ENCODE measurements at regions of chr15 and their contacts with region 1.

Region 1: GRCh38 chr15:100349696-100350433 is 8.1 kb upstream of the ADAMTS17 start:
- DNase-seq: peak; percentile 72 to 91 (median 79)
- ATAC-seq: peak; percentile 92
- H3K4me3 ChIP-seq: peak overlapping the region; percentile 92
- H3K4me3 Mint-ChIP-seq: peak overlapping the region; percentile 98
- H3K27ac ChIP-seq: peak overlapping the region; percentile 59 to 72
- H3K27ac Mint-ChIP-seq: peak overlapping the region; percentile 83
- H3K4me1 ChIP-seq: peaks cover 14% of the 10 kb centered on the region
- H3K4me1 Mint-ChIP-seq: peaks cover 13% of the 10 kb centered on the region
- H3K27me3 ChIP-seq: peaks cover 12 to 18% of the 10 kb centered on the region in 2 experiments
- H3K27me3 Mint-ChIP-seq: peaks cover 34% of the 10 kb centered on the region
- CTCF ChIP-seq: peak; percentile 90

Region 2: GRCh38 chr15:99250494-99251435 is 1099.1 kb before region 1 on chr15:
- CTCF ChIA-PET with region 1: no interaction called
- POLR2A ChIA-PET with region 1: no interaction called
- intact Hi-C with region 1: loop called in 1 of 2 experiments (anchors 5 kb)
- DNase-seq: peak; percentile 85 to 98 (median 90)
- ATAC-seq: peak; percentile 98
- H3K4me3 ChIP-seq: peak overlapping the region; percentile 75
- H3K4me3 Mint-ChIP-seq: peak overlapping the region; percentile 86
- H3K27ac ChIP-seq: peak overlapping the region; percentile 32 to 53
- H3K27ac Mint-ChIP-seq: peak overlapping the region; percentile 81
- H3K4me1 ChIP-seq: peaks cover 22% of the 10 kb centered on the region
- H3K4me1 Mint-ChIP-seq: peaks cover 24% of the 10 kb centered on the region
- H3K27me3 ChIP-seq: no peaks in the 10 kb centered on the region
- H3K27me3 Mint-ChIP-seq: no peaks in the 10 kb centered on the region
- CTCF ChIP-seq: no peak

Region 3: GRCh38 chr15:100152463-100152862 is 197.4 kb before region 1 on chr15:
- CTCF ChIA-PET with region 1: no interaction called
- POLR2A ChIA-PET with region 1: no interaction called
- intact Hi-C with region 1: no loop called
- DNase-seq: no peak
- ATAC-seq: no peak
- H3K4me3 ChIP-seq: no peak overlapping the region
- H3K4me3 Mint-ChIP-seq: no peak overlapping the region
- H3K27ac ChIP-seq: no peak overlapping the region
- H3K27ac Mint-ChIP-seq: no peak overlapping the region
- H3K4me1 ChIP-seq: no peaks in the 10 kb centered on the region
- H3K4me1 Mint-ChIP-seq: no peaks in the 10 kb centered on the region
- H3K27me3 ChIP-seq: no peaks in the 10 kb centered on the region
- H3K27me3 Mint-ChIP-seq: no peaks in the 10 kb centered on the region
- CTCF ChIP-seq: no peak

Region 4: DNA sequence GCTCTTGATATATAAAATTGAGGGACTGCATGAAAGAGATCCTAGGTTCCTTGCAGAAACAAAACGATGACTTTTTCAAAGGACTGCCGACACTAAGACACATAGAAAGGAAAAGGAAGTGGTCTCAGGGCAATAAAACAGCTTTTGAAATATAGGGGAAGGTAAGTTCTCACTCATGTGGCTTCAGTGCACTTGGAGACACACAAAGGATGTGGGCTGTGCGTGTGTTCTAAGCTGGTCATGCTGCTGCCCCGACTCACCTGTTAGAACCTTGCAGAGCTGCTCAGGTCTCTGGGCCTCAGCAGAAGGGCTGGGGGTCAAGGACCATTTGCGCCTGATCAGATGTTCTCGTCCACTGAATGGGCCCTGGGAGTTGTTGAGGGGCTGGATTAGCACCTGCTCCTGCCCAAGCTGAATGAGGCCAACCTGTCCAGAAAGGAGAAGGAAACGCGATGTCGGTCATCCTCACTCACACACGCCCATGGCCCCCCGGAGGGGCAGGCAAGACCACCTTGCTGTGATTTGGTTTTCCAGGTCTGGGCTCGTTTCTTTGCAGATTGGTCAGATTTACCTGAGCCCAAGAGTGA is 19.1 kb before region 1 on chr15:
- CTCF ChIA-PET with region 1: interaction called, 13 read pairs
- POLR2A ChIA-PET with region 1: interaction called, 11 read pairs
- intact Hi-C with region 1: no loop called
- DNase-seq: peak in 10 of 14 experiments; percentile 22 to 87 (median 46)
- ATAC-seq: peak; percentile 90
- H3K4me3 ChIP-seq: peak overlapping the region; percentile 44
- H3K4me3 Mint-ChIP-seq: peak overlapping the region; percentile 54
- H3K27ac ChIP-seq: peak overlapping the region in 1 of 2 donors; percentile 46
- H3K27ac Mint-ChIP-seq: peak overlapping the region; percentile 50
- H3K4me1 ChIP-seq: peaks cover 72% of the 10 kb centered on the region
- H3K4me1 Mint-ChIP-seq: peaks cover 87% of the 10 kb centered on the region
- H3K27me3 ChIP-seq: no peaks in the 10 kb centered on the region
- H3K27me3 Mint-ChIP-seq: no peaks in the 10 kb centered on the region
- CTCF ChIP-seq: no peak

Region 5: DNA sequence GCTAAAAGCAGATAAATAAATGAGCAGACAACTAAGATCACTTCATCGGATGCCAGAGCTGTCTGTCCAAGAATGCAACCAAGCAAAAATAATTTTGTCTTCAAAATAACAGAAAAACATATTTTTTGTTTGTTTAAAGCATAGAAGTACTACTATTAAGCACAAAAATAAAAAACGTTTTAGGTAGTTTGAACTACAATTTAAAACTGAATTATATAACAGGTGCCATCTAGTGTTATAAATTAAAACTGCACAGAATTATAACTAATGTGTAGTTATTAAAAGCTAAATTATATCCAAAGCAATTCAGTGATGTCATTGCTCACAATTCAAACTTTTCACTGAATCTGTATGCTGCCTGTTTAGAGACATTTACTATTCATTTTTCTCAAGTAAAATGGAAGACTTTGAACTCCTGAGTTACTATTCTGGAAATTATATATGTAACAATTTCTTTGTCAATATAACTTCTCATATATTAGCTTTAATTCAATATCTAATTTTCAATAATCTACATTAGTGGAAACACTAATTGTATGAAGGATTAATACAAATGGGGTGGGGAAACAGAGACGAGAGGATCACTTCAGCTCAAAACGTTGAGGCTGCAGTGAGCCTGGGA is 222.6 kb after region 1 on chr15:
- CTCF ChIA-PET with region 1: interaction called, 19 read pairs
- POLR2A ChIA-PET with region 1: interaction called, 29 read pairs
- intact Hi-C with region 1: loop called in 1 of 2 experiments (anchors 2 kb)
- DNase-seq: peak in 3 of 14 experiments; percentile 41 to 58 (median 53)
- ATAC-seq: peak; percentile 68
- H3K4me3 ChIP-seq: peak overlapping the region; percentile 12
- H3K4me3 Mint-ChIP-seq: peak overlapping the region; percentile 22
- H3K27ac ChIP-seq: peak overlapping the region in 1 of 2 donors; percentile 18
- H3K27ac Mint-ChIP-seq: peak overlapping the region; percentile 74
- H3K4me1 ChIP-seq: peaks cover 19% of the 10 kb centered on the region
- H3K4me1 Mint-ChIP-seq: peaks cover 62% of the 10 kb centered on the region
- H3K27me3 ChIP-seq: no peaks in the 10 kb centered on the region
- H3K27me3 Mint-ChIP-seq: no peaks in the 10 kb centered on the region
- CTCF ChIP-seq: peak; percentile 77

Region 6: DNA sequence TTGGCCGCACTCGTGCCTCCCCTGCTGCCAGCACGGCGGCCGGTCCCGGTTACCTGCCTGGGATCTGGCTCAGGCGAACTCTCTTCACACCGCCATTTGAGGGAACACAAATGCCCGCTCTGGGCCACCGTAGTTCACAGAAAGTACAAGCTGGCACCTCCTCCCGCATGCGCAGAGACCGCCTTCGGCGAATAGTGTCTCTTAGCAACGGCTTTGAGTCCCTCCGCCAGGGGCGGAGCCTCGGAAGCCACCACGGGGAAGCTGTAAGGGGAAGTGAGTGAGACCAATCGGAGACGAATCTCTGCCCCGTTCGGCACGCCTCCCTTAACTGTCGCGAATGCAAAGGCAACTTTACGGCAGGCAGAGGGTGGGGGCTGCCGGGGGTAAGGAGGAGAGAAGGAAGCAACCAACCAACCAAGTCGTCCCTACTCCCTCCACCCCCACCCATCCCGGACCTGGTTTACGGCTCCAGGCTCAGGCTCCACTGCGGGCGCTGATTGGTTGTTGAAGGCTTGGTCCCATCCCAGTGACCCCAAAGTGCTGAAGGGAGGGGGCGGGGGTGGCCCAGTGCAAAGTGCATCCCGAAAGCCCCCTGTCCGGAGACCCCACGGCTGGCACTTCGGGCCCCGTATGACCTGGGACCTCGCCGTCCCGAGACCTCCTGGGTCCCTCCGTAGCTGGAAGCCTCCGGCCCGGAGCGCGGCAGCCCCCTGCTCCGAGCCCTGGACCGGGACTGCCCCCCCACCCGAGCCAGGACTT is 252.4 kb after region 1 on chr15 and contains the starts of genes ASB7 and LINS1:
- CTCF ChIA-PET with region 1: interaction called, 18 read pairs
- POLR2A ChIA-PET with region 1: interaction called, 23 read pairs
- intact Hi-C with region 1: loop called in 1 of 2 experiments (anchors 10 kb)
- DNase-seq: peak; percentile 99 to 100 (median 100)
- ATAC-seq: peak; percentile 89
- H3K4me3 ChIP-seq: peak within 1 kb of the TSS; percentile 96
- H3K4me3 Mint-ChIP-seq: peak within 1 kb of the TSS; percentile 96
- H3K27ac ChIP-seq: peak within 1 kb of the TSS; percentile 84 to 94
- H3K27ac Mint-ChIP-seq: peak within 1 kb of the TSS; percentile 87
- H3K4me1 ChIP-seq: peaks cover 44% of the 10 kb centered on the region
- H3K4me1 Mint-ChIP-seq: peaks cover 62% of the 10 kb centered on the region
- H3K27me3 ChIP-seq: no peaks in the 10 kb centered on the region
- H3K27me3 Mint-ChIP-seq: no peaks in the 10 kb centered on the region
- CTCF ChIP-seq: no peak
- total RNA-seq, gene ASB7: 14.9 to 16.7 TPM
- total RNA-seq, gene LINS1: 38.9 to 39.6 TPM

Region 7: DNA sequence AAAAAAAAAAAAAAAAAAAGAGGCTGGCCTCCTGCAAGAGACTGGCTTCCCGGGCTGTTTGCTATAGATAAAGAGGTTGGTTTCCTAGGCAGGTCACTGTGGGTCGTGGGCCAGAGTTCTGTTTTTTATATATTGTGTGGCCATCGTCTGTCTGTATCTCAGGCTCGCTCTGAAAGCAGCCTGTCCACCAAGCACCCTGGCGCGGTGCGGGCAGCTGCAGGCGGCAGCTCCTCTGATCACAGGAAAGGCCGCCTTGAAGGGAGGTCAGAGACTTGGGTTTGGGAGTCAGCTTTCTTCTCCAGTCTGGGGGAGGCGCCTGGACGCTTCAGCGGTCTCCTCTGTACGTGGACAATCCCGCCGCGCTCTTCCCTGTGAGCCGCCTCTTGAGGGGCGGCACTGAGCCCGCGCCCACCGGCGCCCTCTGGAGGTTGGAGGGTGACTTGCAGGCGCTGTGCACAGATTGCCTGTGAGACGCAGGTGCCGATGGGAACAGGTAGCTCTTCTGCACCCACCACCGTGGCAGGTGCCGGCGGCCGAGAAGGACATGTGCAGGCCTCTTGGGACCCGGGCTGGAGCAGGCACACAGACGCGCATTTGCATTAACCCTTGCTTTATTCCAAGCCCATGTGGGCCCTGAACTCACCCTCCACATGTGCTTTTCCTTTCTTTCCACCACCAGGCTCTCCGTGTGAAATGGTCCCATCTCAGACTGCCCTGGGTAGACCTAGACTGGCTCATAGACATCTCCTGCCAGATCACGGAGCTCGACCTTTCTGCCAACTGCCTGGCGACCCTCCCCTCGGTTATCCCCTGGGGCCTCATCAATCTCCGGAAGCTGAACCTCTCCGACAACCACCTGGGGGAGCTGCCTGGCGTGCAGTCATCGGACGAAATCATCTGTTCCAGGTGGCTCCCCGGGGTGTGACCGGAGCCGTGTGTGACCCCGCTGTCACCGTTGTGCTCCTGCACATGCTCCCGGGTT is 658.6 kb after region 1 on chr15:
- CTCF ChIA-PET with region 1: interaction called, 16 read pairs
- POLR2A ChIA-PET with region 1: no interaction called
- intact Hi-C with region 1: loop called in 1 of 2 experiments (anchors 5 kb)
- DNase-seq: peak; percentile 76 to 93 (median 84)
- ATAC-seq: peak; percentile 97
- H3K4me3 ChIP-seq: peak overlapping the region; percentile 69
- H3K4me3 Mint-ChIP-seq: peak overlapping the region; percentile 94
- H3K27ac ChIP-seq: no peak overlapping the region
- H3K27ac Mint-ChIP-seq: peak overlapping the region; percentile 65
- H3K4me1 ChIP-seq: peaks cover 22% of the 10 kb centered on the region
- H3K4me1 Mint-ChIP-seq: peaks cover 24% of the 10 kb centered on the region
- H3K27me3 ChIP-seq: no peaks in the 10 kb centered on the region
- H3K27me3 Mint-ChIP-seq: peaks cover 6% of the 10 kb centered on the region
- CTCF ChIP-seq: peak; percentile 99

Measured in CD4-positive, alpha-beta T cell (primary cell).